ENCODE measurements at regions of chr17 and their contacts with region 1.

Region 1: GRCh38 chr17:49191917-49192741 is 18.2 kb downstream of the GNGT2 start:
- DNase-seq: peak; percentile 87 to 96 (median 92)
- H3K4me3 ChIP-seq: peak overlapping the region; percentile 60 to 99 (median 82)
- H3K27ac ChIP-seq: peak overlapping the region; percentile 94 to 100 (median 99)
- H3K27me3 ChIP-seq: no peaks in the 10 kb centered on the region
- CTCF ChIP-seq: peak in 54 of 56 donors; percentile 21 to 70 (median 50)

Region 2: DNA sequence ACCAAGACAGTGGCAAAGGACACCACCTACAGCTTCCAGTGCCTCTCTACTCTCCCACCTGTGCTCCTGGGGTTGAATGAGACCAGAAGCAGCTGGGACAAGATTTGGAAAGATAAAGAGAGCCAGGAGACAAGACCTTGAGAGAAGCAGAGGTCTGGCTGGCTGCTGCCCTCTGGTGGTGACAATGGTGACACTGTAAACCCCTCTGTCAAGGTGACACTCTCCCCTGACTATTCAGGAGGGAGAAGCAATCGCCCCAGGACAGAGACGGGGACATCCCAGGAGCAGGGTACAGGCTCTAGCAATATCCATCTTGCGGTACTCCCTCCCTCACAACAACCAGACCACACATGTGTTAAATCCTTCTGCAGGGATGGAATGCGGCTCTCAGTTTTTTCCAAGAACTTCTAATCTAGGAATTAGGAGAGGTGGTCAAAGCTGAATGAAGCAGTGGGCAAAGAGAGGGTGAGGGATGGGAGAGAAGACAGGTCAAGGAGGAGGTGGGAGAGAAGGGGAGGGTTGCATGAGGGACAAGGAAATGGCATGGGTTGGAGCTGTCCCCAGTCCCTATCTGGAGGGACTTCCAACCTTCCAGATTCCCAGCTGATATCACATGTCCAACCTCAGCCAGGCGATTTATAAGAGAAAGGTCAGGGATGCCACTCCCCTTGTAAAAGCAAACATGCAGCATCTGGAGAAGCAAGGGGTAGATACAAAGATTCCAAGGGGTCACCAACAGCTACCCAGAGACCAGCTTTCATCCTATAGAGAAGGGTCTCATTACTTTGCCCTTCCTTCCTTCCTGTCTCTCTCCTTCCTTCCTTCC is 35.5 kb after region 1 on chr17:
- intact Hi-C with region 1: loop called (anchors 5 kb)
- DNase-seq: peak in 9 of 10 donors; percentile 49 to 84 (median 76)
- H3K4me3 ChIP-seq: no peak overlapping the region
- H3K27ac ChIP-seq: no peak overlapping the region
- H3K27me3 ChIP-seq: peaks cover 0 to 32% (median 20%) of the 10 kb centered on the region in 45 donors
- CTCF ChIP-seq: peak; percentile 59 to 90 (median 81)

Region 3: GRCh38 chr17:49361902-49362722 is 170.0 kb after region 1 on chr17 and contains the start of gene ZNF652:
- intact Hi-C with region 1: loop called in 1 of 2 experiments (anchors 5 kb)
- DNase-seq: peak; percentile 81 to 93 (median 90)
- H3K4me3 ChIP-seq: peak within 1 kb of the TSS; percentile 69 to 99 (median 94)
- H3K27ac ChIP-seq: peak within 1 kb of the TSS; percentile 89 to 99 (median 97)
- H3K27me3 ChIP-seq: no peaks in the 10 kb centered on the region
- CTCF ChIP-seq: peak in 3 of 56 donors; percentile 1 to 24 (median 16)
- total RNA-seq, gene ZNF652: 27.4 to 153 (median 59.4) TPM

Region 4: GRCh38 chr17:49390548-49391324 is 198.6 kb after region 1 on chr17:
- intact Hi-C with region 1: loop called in 1 of 2 experiments (anchors 10 kb)
- DNase-seq: peak in 3 of 10 donors; percentile 50 to 58 (median 52)
- H3K4me3 ChIP-seq: peak overlapping the region in 8 of 59 donors; percentile 1 to 37 (median 17)
- H3K27ac ChIP-seq: peak overlapping the region; percentile 83 to 100 (median 97)
- H3K27me3 ChIP-seq: no peaks in the 10 kb centered on the region
- CTCF ChIP-seq: peak in 6 of 56 donors; percentile 13 to 35 (median 18)

Region 5: GRCh38 chr17:49677933-49678847 is 486.1 kb after region 1 on chr17 and contains the start of gene SPOP:
- intact Hi-C with region 1: loop called in 1 of 2 experiments (anchors 5 kb)
- DNase-seq: peak; percentile 98 to 100 (median 99)
- H3K4me3 ChIP-seq: peak within 1 kb of the TSS; percentile 48 to 94 (median 75)
- H3K27ac ChIP-seq: peak within 1 kb of the TSS; percentile 84 to 100 (median 98)
- H3K27me3 ChIP-seq: no peaks in the 10 kb centered on the region
- CTCF ChIP-seq: peak in 12 of 56 donors; percentile 6 to 34 (median 19)
- total RNA-seq, gene SPOP: 75.2 to 140 (median 105) TPM

Region 6: GRCh38 chr17:49788478-49789242 is 596.5 kb after region 1 on chr17 and contains the start of gene KAT7:
- intact Hi-C with region 1: loop called in 1 of 2 experiments (anchors 5 kb)
- DNase-seq: peak; percentile 96 to 100 (median 99)
- H3K4me3 ChIP-seq: peak within 1 kb of the TSS; percentile 68 to 100 (median 99)
- H3K27ac ChIP-seq: peak within 1 kb of the TSS; percentile 86 to 100 (median 99)
- H3K27me3 ChIP-seq: no peaks in the 10 kb centered on the region
- CTCF ChIP-seq: peak in 54 of 56 donors; percentile 21 to 73 (median 54)
- total RNA-seq, gene KAT7: 73.9 to 129 (median 102) TPM

Measured in dorsolateral prefrontal cortex (tissue), 120 donors.